ENCODE measurements at regions of chr3 and their contacts with region 1.

Region 1: GRCh38 chr3:68088216-68088615 is 433.8 kb upstream of the SUCLG2 start:
- DNase-seq: peak in 12 of 14 experiments; percentile 12 to 91 (median 28)
- ATAC-seq: peak; percentile 94
- H3K4me3 ChIP-seq: no peak overlapping the region
- H3K4me3 Mint-ChIP-seq: peak overlapping the region; percentile 64
- H3K27ac ChIP-seq: no peak overlapping the region
- H3K27ac Mint-ChIP-seq: peak overlapping the region; percentile 46
- H3K4me1 ChIP-seq: peaks cover 16% of the 10 kb centered on the region
- H3K4me1 Mint-ChIP-seq: peaks cover 84% of the 10 kb centered on the region
- H3K27me3 ChIP-seq: no peaks in the 10 kb centered on the region
- H3K27me3 Mint-ChIP-seq: no peaks in the 10 kb centered on the region
- CTCF ChIP-seq: no peak

Region 2: DNA sequence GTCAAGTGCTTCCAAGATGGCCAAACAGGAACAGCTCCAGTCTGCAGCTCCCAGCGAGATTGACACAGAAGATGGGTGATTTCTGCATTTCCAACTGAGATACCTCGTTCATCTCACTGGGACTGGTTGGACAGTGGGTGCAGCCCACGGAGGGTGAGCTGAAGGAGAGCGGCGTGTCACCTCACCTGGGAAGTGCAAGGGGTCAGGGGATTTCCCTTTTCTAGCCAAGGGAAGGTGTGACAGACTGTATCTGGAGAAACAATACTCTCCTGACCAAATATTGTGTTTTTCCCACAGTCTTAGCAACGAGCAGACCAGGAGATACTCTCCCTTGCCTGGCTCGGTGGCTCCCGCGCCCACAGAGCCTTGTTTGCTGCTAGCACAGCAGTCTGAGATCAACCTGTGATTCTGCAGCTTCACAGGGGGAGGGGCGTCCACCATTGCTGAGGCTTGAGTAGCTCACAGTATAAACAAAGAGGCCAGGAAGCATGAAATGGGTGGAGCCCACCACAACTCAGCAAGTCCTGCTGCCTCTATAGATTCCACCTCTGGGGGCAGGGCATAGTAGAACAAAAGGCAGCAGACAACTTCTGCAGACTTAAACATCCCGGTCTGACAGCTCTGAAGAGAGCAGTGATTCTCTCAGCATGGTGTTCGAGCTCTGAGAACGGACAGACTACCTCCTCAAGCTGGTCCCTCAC is 140.3 kb before region 1 on chr3:
- CTCF ChIA-PET with region 1: no interaction called
- POLR2A ChIA-PET with region 1: interaction called, 5 read pairs
- intact Hi-C with region 1: loop called in 1 of 2 experiments (anchors 1 kb)
- DNase-seq: peak; percentile 52 to 89 (median 67)
- ATAC-seq: peak; percentile 95
- H3K4me3 ChIP-seq: peak overlapping the region; percentile 49
- H3K4me3 Mint-ChIP-seq: peak overlapping the region; percentile 86
- H3K27ac ChIP-seq: no peak overlapping the region
- H3K27ac Mint-ChIP-seq: peak overlapping the region; percentile 87
- H3K4me1 ChIP-seq: peaks cover 16% of the 10 kb centered on the region
- H3K4me1 Mint-ChIP-seq: peaks cover 47% of the 10 kb centered on the region
- H3K27me3 ChIP-seq: no peaks in the 10 kb centered on the region
- H3K27me3 Mint-ChIP-seq: no peaks in the 10 kb centered on the region
- CTCF ChIP-seq: peak; percentile 24

Region 3: GRCh38 chr3:67957268-67957667 is 130.9 kb before region 1 on chr3:
- CTCF ChIA-PET with region 1: no interaction called
- POLR2A ChIA-PET with region 1: no interaction called
- intact Hi-C with region 1: loop called in 1 of 2 experiments (anchors 5 kb)
- DNase-seq: no peak
- ATAC-seq: no peak
- H3K4me3 ChIP-seq: no peak overlapping the region
- H3K4me3 Mint-ChIP-seq: no peak overlapping the region
- H3K27ac ChIP-seq: no peak overlapping the region
- H3K27ac Mint-ChIP-seq: no peak overlapping the region
- H3K4me1 ChIP-seq: no peaks in the 10 kb centered on the region
- H3K4me1 Mint-ChIP-seq: no peaks in the 10 kb centered on the region
- H3K27me3 ChIP-seq: no peaks in the 10 kb centered on the region
- H3K27me3 Mint-ChIP-seq: no peaks in the 10 kb centered on the region
- CTCF ChIP-seq: no peak

Region 4: DNA sequence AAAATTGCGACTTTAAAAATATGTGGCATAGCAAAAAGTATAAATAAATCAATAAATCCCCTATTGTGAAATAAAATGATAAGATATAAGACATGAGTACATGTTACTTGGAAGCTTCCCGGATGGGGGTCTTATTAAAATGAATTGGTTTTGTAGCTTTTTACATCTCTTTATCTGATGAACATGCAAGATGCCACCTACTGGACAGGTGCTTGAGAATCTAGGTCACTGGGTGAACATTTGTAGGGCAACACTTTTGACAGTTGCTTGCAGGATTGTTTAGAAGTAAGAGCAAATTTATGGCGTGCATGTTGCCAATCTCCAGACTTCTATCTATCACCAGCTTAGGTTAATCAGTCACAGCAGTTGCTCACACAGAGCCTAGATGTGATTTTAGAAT is 71.1 kb before region 1 on chr3:
- CTCF ChIA-PET with region 1: no interaction called
- POLR2A ChIA-PET with region 1: no interaction called
- intact Hi-C with region 1: loop called in 1 of 2 experiments (anchors 10 kb)
- DNase-seq: peak in 2 of 14 experiments; percentile 13 to 20
- ATAC-seq: no peak
- H3K4me3 ChIP-seq: no peak overlapping the region
- H3K4me3 Mint-ChIP-seq: no peak overlapping the region
- H3K27ac ChIP-seq: no peak overlapping the region
- H3K27ac Mint-ChIP-seq: no peak overlapping the region
- H3K4me1 ChIP-seq: no peaks in the 10 kb centered on the region
- H3K4me1 Mint-ChIP-seq: peaks cover 8% of the 10 kb centered on the region
- H3K27me3 ChIP-seq: no peaks in the 10 kb centered on the region
- H3K27me3 Mint-ChIP-seq: no peaks in the 10 kb centered on the region
- CTCF ChIP-seq: no peak

Region 5: GRCh38 chr3:68057637-68058320 is 30.4 kb before region 1 on chr3:
- CTCF ChIA-PET with region 1: no interaction called
- POLR2A ChIA-PET with region 1: interaction called, 9 read pairs
- intact Hi-C with region 1: loop called in 1 of 2 experiments (anchors 1 kb)
- DNase-seq: peak; percentile 43 to 92 (median 55)
- ATAC-seq: peak; percentile 98
- H3K4me3 ChIP-seq: peak overlapping the region; percentile 28
- H3K4me3 Mint-ChIP-seq: peak overlapping the region; percentile 80
- H3K27ac ChIP-seq: peak overlapping the region in 1 of 2 donors; percentile 3
- H3K27ac Mint-ChIP-seq: peak overlapping the region; percentile 83
- H3K4me1 ChIP-seq: peaks cover 30% of the 10 kb centered on the region
- H3K4me1 Mint-ChIP-seq: peaks cover 77% of the 10 kb centered on the region
- H3K27me3 ChIP-seq: no peaks in the 10 kb centered on the region
- H3K27me3 Mint-ChIP-seq: no peaks in the 10 kb centered on the region
- CTCF ChIP-seq: no peak

Region 6: GRCh38 chr3:68116580-68116979 is 28.4 kb after region 1 on chr3:
- CTCF ChIA-PET with region 1: no interaction called
- POLR2A ChIA-PET with region 1: no interaction called
- intact Hi-C with region 1: no loop called
- DNase-seq: no peak
- ATAC-seq: no peak
- H3K4me3 ChIP-seq: no peak overlapping the region
- H3K4me3 Mint-ChIP-seq: no peak overlapping the region
- H3K27ac ChIP-seq: no peak overlapping the region
- H3K27ac Mint-ChIP-seq: no peak overlapping the region
- H3K4me1 ChIP-seq: no peaks in the 10 kb centered on the region
- H3K4me1 Mint-ChIP-seq: no peaks in the 10 kb centered on the region
- H3K27me3 ChIP-seq: no peaks in the 10 kb centered on the region
- H3K27me3 Mint-ChIP-seq: no peaks in the 10 kb centered on the region
- CTCF ChIP-seq: no peak